Dorsolateral prefrontal cortex (tissue), 120 donors: ENCODE measurements at regions of chr6 and their contacts with region 1.

Region 1: GRCh38 chr6:106339334-106340029 is 13.9 kb upstream of the ATG5 start:
- DNase-seq: peak in 4 of 10 donors; percentile 21 to 69 (median 42)
- H3K4me3 ChIP-seq: peak overlapping the region in 22 of 59 donors; percentile 5 to 43 (median 28)
- H3K27ac ChIP-seq: no peak overlapping the region
- H3K27me3 ChIP-seq: peaks cover 0 to 3% (median 0%) of the 10 kb centered on the region in 45 donors
- CTCF ChIP-seq: peak; percentile 43 to 83 (median 69)

Region 2: GRCh38 chr6:106206905-106207304 is 132.6 kb before region 1 on chr6:
- intact Hi-C with region 1: no loop called
- DNase-seq: no peak
- H3K4me3 ChIP-seq: no peak overlapping the region
- H3K27ac ChIP-seq: no peak overlapping the region
- H3K27me3 ChIP-seq: no peaks in the 10 kb centered on the region
- CTCF ChIP-seq: no peak

Region 3: GRCh38 chr6:106556368-106556960 is 217.0 kb after region 1 on chr6:
- intact Hi-C with region 1: loop called in 1 of 2 experiments (anchors 2 kb)
- DNase-seq: no peak
- H3K4me3 ChIP-seq: no peak overlapping the region
- H3K27ac ChIP-seq: no peak overlapping the region
- H3K27me3 ChIP-seq: no peaks in the 10 kb centered on the region
- CTCF ChIP-seq: peak in 48 of 56 donors; percentile 16 to 63 (median 36)

Region 4: GRCh38 chr6:106979427-106979884 is 640.0 kb after region 1 on chr6:
- intact Hi-C with region 1: loop called in 1 of 2 experiments (anchors 5 kb)
- DNase-seq: peak; percentile 67 to 92 (median 86)
- H3K4me3 ChIP-seq: no peak overlapping the region
- H3K27ac ChIP-seq: no peak overlapping the region
- H3K27me3 ChIP-seq: peaks cover under 1 to 73% (median 31%) of the 10 kb centered on the region in 45 donors
- CTCF ChIP-seq: peak; percentile 83 to 97 (median 93)